Mammary epithelial cell (primary cell): ENCODE measurements at regions of chr2 and their contacts with region 1.

Region 1: DNA sequence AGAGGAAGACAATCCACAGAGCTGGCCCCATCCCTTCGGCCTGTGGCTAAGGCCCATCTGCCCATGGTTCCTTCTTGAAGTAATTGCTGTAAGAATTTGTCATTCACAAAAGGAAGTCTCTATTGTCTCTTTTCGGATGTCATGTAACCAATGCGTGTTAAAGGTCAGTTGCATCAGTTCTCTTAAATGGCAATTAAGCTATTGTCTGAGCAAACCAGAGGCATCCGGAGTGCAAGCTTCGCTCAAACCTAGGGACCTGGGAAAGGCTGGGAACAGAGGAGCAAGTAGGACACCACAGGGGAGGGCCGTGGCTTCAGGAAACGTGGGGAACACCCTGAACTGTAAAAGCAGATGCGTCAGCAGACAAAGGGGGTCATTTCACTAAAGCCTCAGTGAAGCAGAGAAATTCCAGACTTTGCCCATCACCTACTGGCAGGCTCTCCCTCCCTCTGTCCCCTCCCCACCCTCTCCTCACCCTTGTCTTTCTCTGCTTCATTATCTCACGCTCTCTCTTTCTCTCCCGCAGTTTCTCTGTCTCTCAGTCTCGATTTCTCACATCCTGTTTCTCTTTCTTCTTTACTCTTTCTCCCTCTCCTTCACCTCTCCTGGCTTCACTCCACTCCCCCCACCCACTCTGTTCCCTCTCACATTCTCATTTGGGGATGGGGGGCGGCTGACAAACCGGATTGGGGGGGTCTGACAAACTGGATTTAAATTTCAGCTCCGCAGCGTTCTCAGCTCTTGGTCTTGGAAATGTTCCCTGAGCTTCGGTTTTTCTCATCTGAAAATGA is 204.6 kb upstream of the TNP1 start:
- DNase-seq: no peak
- H3K4me3 ChIP-seq: no peak overlapping the region
- H3K27ac ChIP-seq: no peak overlapping the region
- H3K4me1 ChIP-seq: no peaks in the 10 kb centered on the region
- H3K27me3 ChIP-seq: no peaks in the 10 kb centered on the region
- CTCF ChIP-seq: no peak

Region 2: DNA sequence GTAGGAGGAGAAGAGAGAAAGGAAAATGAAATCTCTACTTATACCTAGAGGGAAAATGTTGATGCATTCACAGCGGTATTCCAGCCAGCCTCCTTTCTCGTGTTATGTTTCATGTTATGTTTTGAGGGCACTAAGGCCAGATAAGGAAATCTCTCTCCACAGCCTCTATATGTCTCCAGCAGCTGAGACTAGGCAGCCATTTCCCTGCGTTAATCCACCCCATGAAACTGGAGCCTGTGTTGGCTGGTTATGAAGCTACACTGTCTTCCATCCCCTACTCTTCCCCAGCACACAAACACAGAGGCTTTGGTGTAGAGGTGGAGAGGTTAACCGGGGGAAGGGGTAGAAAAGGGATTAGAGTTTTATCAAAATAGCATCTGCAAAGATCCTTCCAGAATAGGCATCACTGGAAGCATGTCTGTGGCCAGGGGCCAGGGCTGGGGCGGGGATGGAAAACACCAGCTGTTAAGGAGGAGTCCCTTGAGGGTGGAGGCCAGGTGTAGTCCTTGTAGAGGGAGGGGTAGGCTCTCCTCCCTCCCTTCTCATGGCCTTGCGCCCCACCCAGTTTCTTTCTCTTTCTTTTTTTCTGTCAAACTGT is 103.7 kb before region 1 on chr2:
- CTCF ChIA-PET with region 1: no interaction called
- dilution Hi-C with region 1: loop called (anchors 5 kb)
- in situ Hi-C with region 1: no loop called
- intact Hi-C with region 1: no loop called
- DNase-seq: no peak
- H3K4me3 ChIP-seq: no peak overlapping the region
- H3K27ac ChIP-seq: no peak overlapping the region
- H3K4me1 ChIP-seq: no peaks in the 10 kb centered on the region
- H3K27me3 ChIP-seq: peaks cover 2% of the 10 kb centered on the region
- CTCF ChIP-seq: no peak

Region 3: DNA sequence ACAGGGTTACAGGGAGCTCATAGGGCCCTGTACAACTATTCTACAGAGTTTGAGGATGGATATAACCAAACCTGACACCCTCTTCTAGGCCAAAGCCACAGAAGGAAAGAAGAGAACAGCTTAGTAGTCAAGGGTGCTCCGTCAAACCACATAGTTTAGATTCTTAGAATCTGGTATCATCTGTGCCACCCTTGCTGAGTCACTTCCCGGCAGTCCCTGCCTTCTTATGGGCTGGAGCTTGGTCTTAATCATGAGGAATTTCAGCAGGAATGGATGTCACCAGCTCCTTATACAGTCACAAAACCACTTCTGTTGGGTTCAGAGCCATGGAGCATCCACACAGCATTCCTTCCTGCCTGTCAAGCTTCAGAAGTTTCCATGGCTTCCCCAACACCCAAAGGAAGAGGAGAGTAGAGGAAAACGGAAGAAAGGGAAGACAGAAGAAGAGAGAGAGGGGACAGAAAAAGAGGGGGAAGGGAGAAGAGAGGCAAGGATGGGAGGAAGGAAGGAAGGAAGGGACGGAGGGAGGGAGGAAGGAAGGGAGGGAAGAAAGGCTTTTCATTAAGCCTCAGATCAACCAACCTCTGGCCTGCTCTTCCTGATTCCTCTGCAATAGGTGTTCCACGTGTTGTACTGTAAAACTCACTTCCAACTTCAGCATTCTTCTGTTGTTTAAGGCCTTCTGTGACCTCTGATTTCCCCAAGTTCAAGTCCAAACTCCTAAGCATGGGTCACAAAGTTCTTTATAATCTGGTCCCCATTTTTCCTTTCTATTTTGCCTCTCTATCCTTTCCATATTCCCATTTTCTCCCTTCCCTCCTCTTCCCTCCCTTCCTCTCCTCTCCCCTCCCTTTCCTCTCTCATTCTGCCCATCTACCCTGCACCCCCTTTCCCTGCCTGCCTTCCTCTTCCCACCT is 41.6 kb after region 1 on chr2:
- CTCF ChIA-PET with region 1: interaction called, 25 read pairs
- dilution Hi-C with region 1: no loop called
- in situ Hi-C with region 1: no loop called
- intact Hi-C with region 1: no loop called
- DNase-seq: peak; percentile 83
- H3K4me3 ChIP-seq: no peak overlapping the region
- H3K27ac ChIP-seq: peak overlapping the region; percentile 92
- H3K4me1 ChIP-seq: peaks cover 58% of the 10 kb centered on the region
- H3K27me3 ChIP-seq: no peaks in the 10 kb centered on the region
- CTCF ChIP-seq: no peak